Activated CD4-positive, alpha-beta memory T cell treated with anti-CD3 and anti-CD28 coated beads for 36 hours (primary cell): ENCODE measurements at regions of chr1 and their contacts with region 1.

Region 1: GRCh38 chr1:174262349-174263241 is 103.3 kb downstream of the RABGAP1L start:
- DNase-seq: no peak
- H3K4me3 Mint-ChIP-seq: no peak overlapping the region
- H3K27ac Mint-ChIP-seq: no peak overlapping the region
- H3K4me1 Mint-ChIP-seq: no peaks in the 10 kb centered on the region
- H3K27me3 Mint-ChIP-seq: no peaks in the 10 kb centered on the region

Region 2: GRCh38 chr1:174726167-174726879 is 463.7 kb after region 1 on chr1:
- CTCF ChIA-PET with region 1: interaction called, 24 read pairs
- POLR2A ChIA-PET with region 1: no interaction called
- intact Hi-C with region 1: loop called (anchors 1 kb)
- DNase-seq: no peak
- H3K4me3 Mint-ChIP-seq: no peak overlapping the region
- H3K27ac Mint-ChIP-seq: no peak overlapping the region
- H3K4me1 Mint-ChIP-seq: no peaks in the 10 kb centered on the region
- H3K27me3 Mint-ChIP-seq: no peaks in the 10 kb centered on the region

Region 3: DNA sequence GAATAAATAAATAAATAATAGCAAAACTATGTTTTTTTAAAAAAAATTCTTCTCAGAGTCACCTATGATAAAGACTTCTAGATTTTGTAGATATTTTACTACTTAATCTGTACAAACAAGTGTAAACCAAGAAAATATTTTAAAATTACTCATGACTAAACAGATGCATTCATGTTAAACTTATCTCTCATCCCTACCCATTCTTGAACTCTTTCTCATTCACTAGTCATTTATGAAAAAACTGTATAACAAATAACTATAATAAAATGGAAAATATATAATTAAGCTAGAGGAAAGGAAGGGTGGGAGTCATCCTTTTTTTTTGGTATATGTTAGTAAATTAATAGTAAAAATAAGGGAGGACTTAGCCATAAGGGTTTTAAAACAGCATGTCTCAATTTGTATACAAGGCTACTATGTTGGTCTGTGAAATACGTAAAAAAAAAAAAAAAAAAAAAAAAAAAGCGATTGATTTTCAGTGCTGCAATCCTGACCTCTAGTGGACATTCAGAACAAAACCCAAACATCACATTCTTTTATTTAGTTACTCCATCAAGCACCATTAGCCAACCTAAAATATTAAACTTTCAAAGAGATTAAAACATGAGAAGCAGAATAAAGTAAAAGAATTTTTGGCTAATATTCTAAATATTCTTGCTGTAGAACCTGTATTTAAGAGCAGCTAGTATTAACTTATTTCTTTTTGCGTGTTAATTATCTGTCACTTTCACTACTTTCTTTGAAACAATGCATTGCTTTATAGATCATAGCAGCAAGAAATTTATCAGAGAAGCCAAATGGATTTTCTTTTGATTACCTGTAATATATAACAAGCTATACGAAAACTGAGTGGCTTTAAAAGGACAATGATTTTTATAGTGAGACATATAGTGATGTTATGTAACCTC is 481.3 kb after region 1 on chr1:
- CTCF ChIA-PET with region 1: interaction called, 63 read pairs
- POLR2A ChIA-PET with region 1: no interaction called
- intact Hi-C with region 1: loop called (anchors 1 kb)
- DNase-seq: no peak
- H3K4me3 Mint-ChIP-seq: no peak overlapping the region
- H3K27ac Mint-ChIP-seq: no peak overlapping the region
- H3K4me1 Mint-ChIP-seq: peaks cover 4% of the 10 kb centered on the region
- H3K27me3 Mint-ChIP-seq: no peaks in the 10 kb centered on the region

Region 4: GRCh38 chr1:174812656-174813055 is 550.1 kb after region 1 on chr1:
- CTCF ChIA-PET with region 1: no interaction called
- POLR2A ChIA-PET with region 1: no interaction called
- intact Hi-C with region 1: no loop called
- DNase-seq: no peak
- H3K4me3 Mint-ChIP-seq: no peak overlapping the region
- H3K27ac Mint-ChIP-seq: no peak overlapping the region
- H3K4me1 Mint-ChIP-seq: peaks cover 20% of the 10 kb centered on the region
- H3K27me3 Mint-ChIP-seq: no peaks in the 10 kb centered on the region